ENCODE measurements at regions of chr1 and their contacts with region 1.

Region 1: DNA sequence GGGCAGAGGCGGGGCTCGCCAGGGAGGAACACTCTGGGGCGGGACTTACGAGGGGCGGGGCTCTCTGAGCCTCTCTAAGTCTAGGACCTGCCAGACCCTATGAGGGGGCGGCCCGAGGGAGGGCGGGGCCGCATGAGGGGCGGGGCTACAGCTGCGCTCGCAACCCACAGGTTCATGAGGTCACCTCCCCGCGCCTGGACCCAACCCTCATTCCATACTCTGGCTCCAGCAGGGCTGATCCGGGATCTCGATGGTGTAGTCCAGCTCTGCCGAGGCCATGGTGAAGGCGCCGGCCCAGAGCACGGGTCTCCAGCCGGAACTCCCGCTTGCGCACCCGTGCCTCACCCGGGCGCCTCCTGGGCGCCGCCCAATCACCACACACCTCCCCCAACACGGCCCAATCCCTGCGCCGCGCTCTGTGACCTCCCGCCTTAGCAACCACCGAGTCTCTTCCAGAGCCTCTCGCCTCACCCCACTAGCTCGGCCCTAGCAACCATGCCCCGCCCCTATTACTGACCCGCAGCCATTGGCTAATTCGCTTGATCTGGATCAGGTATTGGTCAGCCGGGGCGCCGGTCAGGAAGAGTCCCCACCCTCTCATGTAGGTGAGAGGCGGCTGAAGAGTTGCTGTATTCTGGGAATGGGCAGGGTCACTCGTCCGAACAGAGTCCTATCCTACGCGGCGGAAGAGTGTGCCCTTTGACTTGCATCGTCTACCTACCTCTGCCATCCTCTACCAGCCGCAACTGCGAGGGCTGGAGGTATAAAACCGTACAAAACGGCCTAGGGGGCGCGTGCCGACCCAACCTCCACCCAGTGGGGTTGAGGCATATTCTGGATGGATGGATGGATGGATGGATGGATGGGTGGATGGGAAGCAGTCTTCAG is at the starts of genes ARMH1 and TMEM53:
- DNase-seq: peak; percentile 100
- H3K4me3 ChIP-seq: peak within 1 kb of the TSS; percentile 59 to 72 (median 68)
- H3K27ac ChIP-seq: peak within 1 kb of the TSS; percentile 90 to 95 (median 94)
- H3K4me1 ChIP-seq: peaks cover 0 to 31% (median 21%) of the 10 kb centered on the region in 4 donors
- H3K27me3 ChIP-seq: no peaks in the 10 kb centered on the region
- CTCF ChIP-seq: no peak
- EP300 ChIP-seq: no peak
- POLR2A ChIP-seq: peak in 1 of 2 donors; percentile 45
- total RNA-seq, gene ARMH1: 0.33 to 1.5 (median 1.1) TPM in 3 of 4 donors, not detected in the other
- total RNA-seq, gene TMEM53: 1.7 to 5.6 (median 4.5) TPM

Region 2: DNA sequence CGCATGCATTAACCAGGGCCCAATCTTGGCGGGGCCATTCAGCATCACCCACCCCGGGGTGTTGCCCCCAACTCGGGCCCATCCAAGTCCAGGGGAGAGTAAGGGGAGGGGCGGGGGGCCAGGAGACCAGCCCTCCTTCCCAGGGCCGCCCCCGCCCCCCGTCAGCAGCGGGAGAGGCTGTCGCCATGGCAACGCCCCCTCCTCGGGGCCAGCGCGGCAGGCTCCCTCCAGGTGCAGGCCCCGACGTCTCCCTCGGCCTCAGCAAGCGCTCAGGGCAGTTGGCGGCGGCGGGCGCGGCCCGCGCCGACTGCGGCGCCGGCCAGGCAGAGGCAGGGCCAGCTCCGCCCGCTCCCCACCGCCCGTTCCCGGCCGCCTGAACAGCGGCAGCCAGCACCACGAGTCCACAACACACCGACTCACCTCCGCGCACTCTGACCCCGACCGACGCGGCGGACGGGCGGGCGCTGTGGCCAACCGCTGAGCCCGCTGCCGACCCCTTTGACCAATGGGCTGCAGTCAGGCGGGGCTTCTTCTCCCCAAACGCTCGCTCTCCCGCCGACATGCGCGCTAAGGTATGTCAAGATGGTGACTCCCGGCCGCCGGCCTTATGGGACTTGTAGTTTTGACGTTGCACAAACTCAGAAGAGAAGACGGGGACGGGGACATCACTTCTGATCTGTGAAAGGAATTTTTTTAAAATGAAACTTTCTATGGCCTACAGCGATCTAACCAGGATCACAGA is 319.3 kb before region 1 on chr1 and contains the start of gene ERI3:
- intact Hi-C with region 1: loop called (anchors 1 kb)
- DNase-seq: peak; percentile 99
- H3K4me3 ChIP-seq: peak within 1 kb of the TSS; percentile 78 to 99 (median 89)
- H3K27ac ChIP-seq: peak within 1 kb of the TSS; percentile 74 to 79 (median 75)
- H3K4me1 ChIP-seq: peaks cover 0 to 27% (median 23%) of the 10 kb centered on the region in 4 donors
- H3K27me3 ChIP-seq: no peaks in the 10 kb centered on the region
- CTCF ChIP-seq: no peak
- EP300 ChIP-seq: no peak
- POLR2A ChIP-seq: no peak
- total RNA-seq, gene ERI3: 33.2 to 50.4 (median 39.8) TPM

Region 3: DNA sequence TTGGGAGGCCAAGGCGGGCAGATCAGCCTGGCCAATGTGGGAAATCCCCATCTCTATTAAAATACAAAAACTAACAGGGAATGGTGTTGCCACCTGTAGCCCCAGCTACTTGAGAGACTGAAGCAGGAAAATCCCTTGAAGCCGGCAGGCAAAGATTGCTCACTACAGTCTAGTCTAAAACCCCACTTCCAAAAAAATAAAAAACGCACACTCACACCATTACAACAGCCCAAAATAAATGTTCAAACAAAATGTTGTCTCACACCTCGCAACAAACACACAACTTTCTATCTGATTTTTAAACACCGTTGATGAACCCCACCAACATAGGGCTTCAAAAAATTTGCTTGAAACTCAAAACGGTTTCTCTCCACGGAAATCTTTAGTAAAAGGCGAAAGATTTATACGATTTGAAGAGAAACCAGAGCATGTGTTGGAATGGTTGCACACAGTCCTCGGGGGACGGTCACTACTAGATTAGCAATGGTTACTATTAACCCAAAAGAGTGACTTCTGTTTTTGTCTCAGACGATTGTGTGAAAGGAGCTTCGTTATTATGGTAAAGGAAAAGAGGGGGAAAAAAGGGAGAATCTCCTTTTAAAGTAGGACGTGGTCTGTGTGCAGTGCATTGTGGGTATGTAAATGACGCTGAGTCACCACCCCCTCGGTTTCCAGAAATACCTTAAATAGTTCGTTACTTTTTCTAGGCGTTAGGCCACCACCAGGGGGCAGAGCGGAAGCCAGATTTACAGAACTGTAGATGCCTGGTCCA is 56.6 kb after region 1 on chr1 and contains the start of gene RNU5D-1:
- intact Hi-C with region 1: no loop called
- DNase-seq: peak; percentile 96
- H3K4me3 ChIP-seq: peak within 1 kb of the TSS in 3 of 4 donors; percentile 13 to 20 (median 14)
- H3K27ac ChIP-seq: peak within 1 kb of the TSS; percentile 77 to 88 (median 82)
- H3K4me1 ChIP-seq: peaks cover 0 to 8% (median 4%) of the 10 kb centered on the region in 4 donors
- H3K27me3 ChIP-seq: no peaks in the 10 kb centered on the region
- CTCF ChIP-seq: peak; percentile 39 to 85 (median 68)
- EP300 ChIP-seq: peak in 2 of 4 donors; percentile 10 to 20
- POLR2A ChIP-seq: peak; percentile 95
- total RNA-seq, gene RNU5D-1: not detected

Region 4: DNA sequence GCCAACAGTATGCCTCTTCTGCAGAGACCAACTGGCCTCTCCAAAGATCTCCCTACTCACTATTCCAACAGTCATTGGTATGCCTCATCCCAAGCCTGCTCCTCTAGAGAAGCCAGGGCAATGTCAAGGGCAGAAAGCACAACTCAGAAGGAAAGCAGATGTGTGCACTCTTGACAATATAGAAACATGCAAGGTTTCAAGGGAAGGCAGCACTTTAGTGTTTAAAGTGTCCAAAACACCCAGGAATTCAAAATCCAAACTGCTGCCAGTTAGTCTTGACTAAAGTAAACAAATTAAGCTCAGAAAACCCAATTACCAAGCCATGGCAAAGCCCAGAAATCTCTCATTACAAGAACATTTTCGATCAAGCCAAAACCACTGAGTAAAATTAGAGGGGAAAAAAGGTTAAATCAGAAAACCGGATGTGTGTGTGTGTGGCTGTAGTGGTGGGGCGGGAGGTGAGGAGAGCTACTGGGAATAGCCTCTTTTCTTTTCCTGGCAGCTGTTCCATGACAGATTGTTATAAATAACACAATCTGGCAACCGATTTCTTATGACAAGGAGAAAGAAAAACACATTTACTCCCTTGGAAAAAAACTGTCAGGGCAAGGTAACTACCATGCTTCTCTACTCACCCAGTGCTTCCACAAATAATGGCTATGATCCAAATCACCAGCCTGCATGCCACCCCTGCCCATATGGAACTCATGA is 272.9 kb after region 1 on chr1:
- intact Hi-C with region 1: no loop called
- DNase-seq: no peak
- H3K4me3 ChIP-seq: no peak overlapping the region
- H3K27ac ChIP-seq: peak overlapping the region; percentile 52 to 74 (median 66)
- H3K4me1 ChIP-seq: peaks cover 0 to 27% (median 22%) of the 10 kb centered on the region in 4 donors
- H3K27me3 ChIP-seq: no peaks in the 10 kb centered on the region
- CTCF ChIP-seq: no peak
- EP300 ChIP-seq: no peak
- POLR2A ChIP-seq: no peak